PC-3 (cell line): ENCODE measurements at regions of chr7 and their contacts with region 1.

Region 1: DNA sequence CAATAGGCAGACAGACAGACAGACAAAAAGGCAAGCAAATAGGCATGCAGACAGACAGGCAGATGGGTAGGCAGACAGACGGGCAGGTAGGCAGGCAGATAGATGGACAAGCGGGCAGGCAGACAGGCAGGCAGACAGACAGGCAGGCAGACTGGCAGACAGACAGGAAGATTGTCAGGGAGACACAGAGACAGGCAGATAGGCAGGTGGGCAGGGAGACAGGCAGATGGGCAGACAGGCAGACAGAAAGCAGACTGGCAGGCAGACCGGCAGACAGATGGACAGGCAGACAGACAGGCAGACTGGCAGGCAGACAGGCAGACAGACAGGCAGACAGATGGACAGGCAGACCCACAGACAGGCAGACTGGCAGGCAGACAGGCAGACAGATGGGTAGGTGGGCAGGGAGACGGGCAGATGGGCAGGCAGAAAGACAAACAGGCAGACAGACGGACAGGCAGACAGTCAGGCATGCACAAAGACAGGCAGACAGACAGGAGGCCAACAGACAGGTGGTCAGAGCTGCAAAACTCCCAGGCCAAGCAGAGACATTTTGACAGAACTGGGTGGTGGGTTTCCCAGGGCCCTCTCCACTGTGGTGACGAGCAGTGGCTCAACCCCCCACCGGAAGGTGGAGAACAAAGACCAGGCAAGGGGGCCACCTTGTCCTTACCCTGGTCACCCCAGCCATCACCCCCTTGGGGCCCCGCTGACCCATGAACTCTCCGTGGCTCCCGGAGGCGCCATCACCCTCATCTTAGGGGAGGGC is 70.5 kb upstream of the MYL10 start:
- DNase-seq: no peak
- ATAC-seq: peak; percentile 16; the same call in 1 of the 2 replicates
- H3K4me3 ChIP-seq: no peak overlapping the region
- H3K27ac ChIP-seq: no peak overlapping the region
- H3K4me1 ChIP-seq: no peaks in the 10 kb centered on the region
- H3K27me3 ChIP-seq: no peaks in the 10 kb centered on the region
- CTCF ChIP-seq: no peak

Region 2: GRCh38 chr7:102175423-102176170 is 476.0 kb after region 1 on chr7:
- CTCF ChIA-PET with region 1: no interaction called
- POLR2A ChIA-PET with region 1: interaction called, 19 read pairs
- intact Hi-C with region 1: no loop called
- DNase-seq: no peak
- ATAC-seq: no peak
- H3K4me3 ChIP-seq: no peak overlapping the region
- H3K27ac ChIP-seq: no peak overlapping the region
- H3K4me1 ChIP-seq: no peaks in the 10 kb centered on the region
- H3K27me3 ChIP-seq: no peaks in the 10 kb centered on the region
- CTCF ChIP-seq: no peak